ENCODE measurements at regions of chr1 and their contacts with region 1.

Region 1: DNA sequence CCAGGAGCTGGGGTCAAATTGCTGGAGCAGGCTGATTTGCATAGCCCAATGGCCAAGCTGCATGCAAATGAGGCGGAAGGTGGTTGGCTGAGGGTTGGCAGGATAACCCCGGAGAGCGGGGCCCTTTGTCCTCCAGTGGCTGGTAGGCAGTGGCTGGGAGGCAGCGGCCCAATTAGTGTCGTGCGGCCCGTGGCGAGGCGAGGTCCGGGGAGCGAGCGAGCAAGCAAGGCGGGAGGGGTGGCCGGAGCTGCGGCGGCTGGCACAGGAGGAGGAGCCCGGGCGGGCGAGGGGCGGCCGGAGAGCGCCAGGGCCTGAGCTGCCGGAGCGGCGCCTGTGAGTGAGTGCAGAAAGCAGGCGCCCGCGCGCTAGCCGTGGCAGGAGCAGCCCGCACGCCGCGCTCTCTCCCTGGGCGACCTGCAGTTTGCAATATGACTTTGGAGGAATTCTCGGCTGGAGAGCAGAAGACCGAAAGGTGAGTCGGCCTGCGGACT is at the start of gene GADD45A:
- DNase-seq: peak; percentile 99
- H3K4me3 ChIP-seq: peak within 1 kb of the TSS; percentile 86
- H3K27ac ChIP-seq: peak within 1 kb of the TSS; percentile 57
- H3K4me1 ChIP-seq: peaks cover 48% of the 10 kb centered on the region
- CTCF ChIP-seq: no peak
- total RNA-seq, gene GADD45A: 46.8 and 60.7 TPM in 2 replicates

Region 2: DNA sequence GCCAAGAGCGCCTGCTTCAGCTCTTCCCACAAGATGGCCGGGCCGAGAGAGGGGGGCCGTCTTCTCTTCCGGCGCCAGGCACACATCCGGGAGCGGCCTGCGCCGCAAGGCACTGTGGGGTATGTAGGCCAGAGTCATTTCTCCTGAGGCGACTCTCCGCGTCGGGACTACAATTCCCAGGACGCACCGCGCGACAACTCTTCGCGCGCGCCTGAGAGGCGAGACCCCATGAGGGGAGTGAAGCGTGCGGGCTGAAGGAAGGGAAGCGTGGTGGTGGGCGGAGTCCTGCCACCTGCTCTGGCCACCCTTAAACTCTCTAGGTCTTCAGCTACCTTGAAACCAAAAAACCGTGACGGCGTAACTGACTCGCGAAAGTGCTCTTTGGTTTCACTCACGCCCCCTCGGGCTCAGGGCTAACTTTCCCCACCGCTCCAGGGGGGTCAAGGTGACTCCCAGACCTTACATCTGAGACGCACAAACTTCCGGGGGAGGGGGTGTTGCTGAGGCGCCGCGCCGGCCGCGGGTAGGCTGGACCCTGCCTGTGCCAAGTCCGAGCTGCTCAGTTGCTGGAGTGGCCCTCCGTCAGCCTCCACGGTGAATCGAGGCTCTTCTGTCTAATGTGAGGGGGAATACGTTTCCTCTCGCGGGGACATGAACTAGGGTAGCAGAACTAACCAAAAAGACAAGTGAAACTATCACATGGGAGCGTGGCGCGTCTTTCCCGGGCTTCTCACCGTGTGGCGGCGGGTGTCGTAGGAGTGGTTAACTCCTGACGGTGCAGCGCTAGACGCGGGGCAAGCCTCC is 254.6 kb before region 1 on chr1 and contains the start of gene SERBP1:
- CTCF ChIA-PET with region 1: interaction called, 3 read pairs
- POLR2A ChIA-PET with region 1: interaction called, 3 read pairs
- intact Hi-C with region 1: loop called (anchors 5 kb)
- DNase-seq: peak; percentile 99
- H3K4me3 ChIP-seq: peak within 1 kb of the TSS; percentile 99
- H3K27ac ChIP-seq: peak within 1 kb of the TSS; percentile 96
- H3K4me1 ChIP-seq: peaks cover 38% of the 10 kb centered on the region
- CTCF ChIP-seq: no peak; the same call in 1 of the 2 replicates
- total RNA-seq, gene SERBP1: 270 and 443 TPM in 2 replicates

Region 3: GRCh38 chr1:67664048-67664447 is 21.1 kb before region 1 on chr1:
- CTCF ChIA-PET with region 1: interaction called, 19 read pairs
- POLR2A ChIA-PET with region 1: interaction called, 3 read pairs
- intact Hi-C with region 1: no loop called
- DNase-seq: no peak
- H3K4me3 ChIP-seq: no peak overlapping the region
- H3K27ac ChIP-seq: no peak overlapping the region
- H3K4me1 ChIP-seq: no peaks in the 10 kb centered on the region
- CTCF ChIP-seq: no peak

Region 4: DNA sequence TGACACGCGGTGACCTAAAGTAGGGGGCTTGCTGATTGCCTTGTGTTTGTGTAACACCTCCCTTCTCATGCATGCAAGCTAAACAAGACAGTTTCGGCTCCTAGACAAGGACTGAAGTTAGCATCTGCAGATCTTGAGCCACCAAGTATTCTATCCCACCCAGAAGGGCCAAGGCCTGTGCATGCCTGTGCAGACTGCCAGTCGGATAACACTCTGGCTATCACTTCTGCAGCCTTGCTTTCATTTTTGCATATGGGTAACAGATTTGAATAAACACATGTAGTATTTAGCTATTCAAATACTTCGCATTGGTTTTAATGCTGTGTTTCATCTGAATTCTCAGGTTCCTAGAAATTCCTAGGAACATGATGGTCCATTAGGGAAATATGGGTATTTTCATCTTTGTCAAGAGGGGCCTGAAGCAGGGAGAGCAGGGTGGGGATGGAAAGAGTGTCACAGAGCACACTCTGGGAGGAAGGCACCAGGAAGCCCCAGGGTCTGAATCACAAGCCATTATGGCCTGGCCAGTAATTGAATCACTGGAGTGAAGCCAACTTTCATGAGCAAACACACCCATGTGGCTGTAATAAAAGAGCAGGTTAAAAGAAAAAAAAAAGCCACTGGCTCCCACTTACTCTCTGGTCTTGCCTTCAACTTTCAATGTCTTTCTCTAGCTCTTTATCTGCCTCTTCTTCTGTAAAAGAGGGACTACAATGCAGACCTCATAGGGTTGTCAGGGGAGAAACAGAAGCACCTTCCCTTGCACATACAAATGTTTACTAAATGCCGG is 28.1 kb after region 1 on chr1:
- CTCF ChIA-PET with region 1: no interaction called
- POLR2A ChIA-PET with region 1: interaction called, 11 read pairs
- intact Hi-C with region 1: loop called (anchors 2 kb)
- DNase-seq: peak; percentile 63
- H3K4me3 ChIP-seq: peak overlapping the region; percentile 10
- H3K27ac ChIP-seq: peak overlapping the region; percentile 67
- H3K4me1 ChIP-seq: peaks cover 44% of the 10 kb centered on the region
- CTCF ChIP-seq: no peak

Region 5: GRCh38 chr1:67735806-67736627 is 50.9 kb after region 1 on chr1:
- CTCF ChIA-PET with region 1: interaction called, 11 read pairs
- POLR2A ChIA-PET with region 1: interaction called, 123 read pairs
- intact Hi-C with region 1: loop called (anchors 1 kb)
- DNase-seq: peak; percentile 93
- H3K4me3 ChIP-seq: peak overlapping the region; percentile 67
- H3K27ac ChIP-seq: peak overlapping the region; percentile 96
- H3K4me1 ChIP-seq: peaks cover 74% of the 10 kb centered on the region
- CTCF ChIP-seq: no peak

Region 6: DNA sequence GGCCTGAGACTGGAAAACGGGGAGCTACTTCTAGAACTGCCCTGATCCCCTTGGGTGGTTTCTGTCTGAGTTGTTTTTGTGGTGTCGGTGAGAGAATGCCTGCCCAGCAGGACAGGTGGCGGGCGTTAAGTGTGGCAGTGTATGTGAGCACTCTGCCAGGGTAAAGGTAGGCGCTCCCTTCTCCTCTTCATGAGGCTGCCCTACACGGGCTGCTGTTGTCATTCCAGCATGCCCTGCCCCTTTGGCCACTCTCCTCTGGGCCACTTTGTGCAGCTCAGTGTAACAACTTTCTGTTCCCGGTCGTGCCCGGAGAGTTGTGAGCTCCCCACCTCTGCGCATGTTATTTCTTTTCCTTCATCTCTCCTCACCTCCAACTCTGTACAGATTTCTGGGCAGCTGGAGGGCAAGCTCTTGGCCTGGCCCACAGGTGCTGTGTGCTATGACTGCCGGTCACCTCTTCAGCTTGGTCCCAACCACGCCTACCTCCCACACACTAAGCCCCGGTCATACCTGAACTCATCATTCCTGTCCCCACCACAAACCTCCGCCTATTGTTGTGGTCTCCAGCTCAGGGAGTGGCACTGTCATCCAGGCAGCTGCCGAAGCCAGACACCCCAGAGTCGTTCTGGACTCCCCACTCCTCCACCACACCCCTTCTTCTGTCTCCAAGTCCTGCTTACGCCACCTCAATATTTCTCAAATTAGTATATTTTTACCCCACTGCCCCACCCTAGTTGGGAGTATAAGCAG is 68.8 kb after region 1 on chr1:
- CTCF ChIA-PET with region 1: no interaction called
- POLR2A ChIA-PET with region 1: interaction called, 33 read pairs
- intact Hi-C with region 1: no loop called
- DNase-seq: no peak
- H3K4me3 ChIP-seq: no peak overlapping the region
- H3K27ac ChIP-seq: no peak overlapping the region
- H3K4me1 ChIP-seq: peaks cover 41% of the 10 kb centered on the region
- CTCF ChIP-seq: no peak

Region 7: DNA sequence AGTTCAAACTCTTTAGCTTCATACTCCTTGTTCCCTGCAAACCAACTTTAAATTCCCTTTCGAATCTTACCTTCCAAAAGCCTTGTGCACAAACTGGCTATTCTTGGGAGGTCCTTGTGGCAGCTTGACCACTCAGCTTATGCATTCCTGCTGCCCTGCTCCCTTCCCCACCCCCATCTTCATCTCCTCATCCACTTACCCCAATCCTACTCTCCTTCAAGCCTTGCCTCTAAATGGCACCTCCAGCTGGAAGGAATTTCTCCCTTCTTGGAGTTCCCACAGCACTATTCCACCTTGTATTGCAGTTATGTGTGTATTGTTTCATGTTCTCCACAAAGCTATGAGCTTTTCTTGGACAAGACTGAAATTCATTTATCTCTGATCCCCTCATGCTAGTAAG is 380.7 kb after region 1 on chr1:
- CTCF ChIA-PET with region 1: no interaction called
- POLR2A ChIA-PET with region 1: no interaction called
- intact Hi-C with region 1: no loop called
- DNase-seq: no peak
- H3K4me3 ChIP-seq: no peak overlapping the region
- H3K27ac ChIP-seq: no peak overlapping the region
- H3K4me1 ChIP-seq: no peaks in the 10 kb centered on the region
- CTCF ChIP-seq: no peak

Region 8: GRCh38 chr1:68162761-68163160 is 477.6 kb after region 1 on chr1:
- CTCF ChIA-PET with region 1: no interaction called
- POLR2A ChIA-PET with region 1: no interaction called
- intact Hi-C with region 1: loop called (anchors 10 kb)
- DNase-seq: no peak
- H3K4me3 ChIP-seq: no peak overlapping the region
- H3K27ac ChIP-seq: no peak overlapping the region
- H3K4me1 ChIP-seq: peaks cover 14% of the 10 kb centered on the region
- CTCF ChIP-seq: peak; percentile 43

Measured in OCI-LY7 (cell line).